Activated B cell treated with CpG ODN at 0.5 μM for 24 hours (primary cell): ENCODE measurements at regions of chr5 and their contacts with region 1.

Region 1: DNA sequence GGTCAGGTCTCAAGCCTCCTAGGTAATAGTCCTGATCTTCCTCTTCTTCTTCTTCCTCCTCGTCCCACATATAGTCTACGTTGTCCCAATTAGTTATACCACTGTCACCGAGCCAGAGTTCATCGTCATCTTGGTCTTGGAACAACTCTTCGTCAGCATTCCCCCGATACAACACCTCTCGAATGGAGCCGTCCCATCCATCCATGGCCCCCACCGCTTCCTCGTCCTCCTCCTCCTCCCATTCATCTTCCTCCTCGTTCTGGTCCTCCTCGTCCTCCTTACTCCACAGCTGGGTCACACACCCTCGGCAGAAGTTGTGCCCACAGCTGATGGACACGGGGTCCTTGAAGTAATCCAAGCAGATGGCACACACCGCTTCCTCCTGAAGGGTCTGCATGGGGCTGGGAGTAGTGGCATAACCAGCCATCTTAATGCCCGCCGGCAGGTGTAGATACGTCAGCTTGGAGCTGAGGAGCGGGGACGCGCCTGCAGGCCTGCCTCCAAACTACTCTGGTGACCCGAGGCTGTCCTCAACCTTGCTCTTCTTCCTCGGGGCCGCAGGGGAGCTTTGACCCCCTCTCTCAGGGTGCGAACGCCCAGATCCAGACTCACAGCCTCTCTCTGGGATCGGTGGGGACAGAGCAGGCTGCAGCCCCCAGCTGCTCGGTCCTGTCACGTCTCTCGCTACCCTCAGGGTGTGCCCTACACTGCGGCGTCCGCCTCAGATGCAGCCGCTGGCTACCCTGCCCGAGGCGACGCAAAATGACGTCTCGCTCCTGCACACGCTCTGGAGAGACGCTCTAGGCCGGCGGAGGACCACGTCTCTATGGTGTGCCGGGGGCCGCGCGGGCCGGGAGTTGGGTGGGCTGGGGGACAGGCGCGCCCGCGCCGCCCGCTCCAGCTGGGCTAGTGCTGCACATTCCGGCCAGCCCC is at the start of gene TRIM52:
- DNase-seq: peak; percentile 86
- ATAC-seq: peak; percentile 80
- H3K4me3 Mint-ChIP-seq: peak within 1 kb of the TSS; percentile 98
- H3K27ac Mint-ChIP-seq: peak within 1 kb of the TSS; percentile 96
- H3K4me1 Mint-ChIP-seq: peaks cover 49% of the 10 kb centered on the region
- H3K27me3 Mint-ChIP-seq: no peaks in the 10 kb centered on the region
- CTCF ChIP-seq: no peak
- total RNA-seq, gene TRIM52: 30.9 and 36.9 TPM in 2 replicates

Region 2: DNA sequence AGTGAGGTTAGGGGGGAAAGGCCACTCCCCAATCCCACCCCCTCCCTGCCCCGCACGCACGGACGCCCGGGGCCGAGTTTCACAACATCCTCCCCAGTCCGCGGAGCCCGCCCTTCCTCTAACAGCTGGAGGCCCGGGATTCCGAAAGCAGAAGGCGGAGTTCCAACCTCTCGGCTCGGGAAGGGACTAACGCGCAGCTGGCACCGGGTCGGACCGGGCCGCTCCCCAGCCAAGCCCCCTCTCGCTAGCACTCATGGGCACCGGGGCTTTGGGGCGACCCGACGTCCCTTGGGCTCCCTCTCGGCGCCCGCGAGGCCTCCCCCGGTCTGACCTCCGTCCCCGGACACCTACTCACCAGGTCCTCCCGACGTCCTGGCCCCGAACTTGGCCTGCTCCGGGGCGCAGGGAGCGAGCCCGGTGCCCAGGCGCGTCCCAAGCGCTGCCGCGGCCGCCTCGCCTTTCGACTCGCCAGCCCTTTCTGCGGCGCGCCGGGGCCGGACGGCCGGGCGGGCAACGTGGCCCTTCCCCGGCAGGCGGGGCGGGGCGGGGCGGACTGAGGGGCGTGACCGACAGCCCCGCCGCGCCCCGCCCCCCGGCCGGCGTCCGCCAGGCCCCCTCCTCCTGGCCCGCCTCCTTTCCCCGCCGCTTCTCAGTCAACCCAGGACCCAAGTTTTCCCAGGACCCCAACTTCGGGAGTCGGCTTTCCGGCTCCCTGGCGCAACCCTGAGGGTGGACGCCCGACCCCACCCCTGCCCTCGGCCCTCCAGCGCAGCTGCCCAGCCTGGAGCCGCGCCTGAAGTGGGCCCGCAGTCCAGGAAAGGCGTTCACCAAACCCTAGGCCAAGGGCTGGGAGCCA is 458.1 kb before region 1 on chr5 and contains the start of gene MGAT1:
- CTCF ChIA-PET with region 1: no interaction called
- POLR2A ChIA-PET with region 1: interaction called, 4 read pairs
- intact Hi-C with region 1: loop called (anchors 2 kb)
- DNase-seq: peak; percentile 84
- ATAC-seq: peak; percentile 60
- H3K4me3 Mint-ChIP-seq: peak within 1 kb of the TSS; percentile 91
- H3K27ac Mint-ChIP-seq: peak within 1 kb of the TSS; percentile 91
- H3K4me1 Mint-ChIP-seq: peaks cover 84% of the 10 kb centered on the region
- H3K27me3 Mint-ChIP-seq: no peaks in the 10 kb centered on the region
- CTCF ChIP-seq: no peak
- total RNA-seq, gene MGAT1: 66.9 and 74.5 TPM in 2 replicates

Region 3: GRCh38 chr5:181159286-181159829 is 101.3 kb before region 1 on chr5:
- CTCF ChIA-PET with region 1: no interaction called
- POLR2A ChIA-PET with region 1: no interaction called
- intact Hi-C with region 1: loop called (anchors 5 kb)
- DNase-seq: peak; percentile 87
- ATAC-seq: peak; percentile 74
- H3K4me3 Mint-ChIP-seq: peak overlapping the region; percentile 75
- H3K27ac Mint-ChIP-seq: peak overlapping the region; percentile 81
- H3K4me1 Mint-ChIP-seq: peaks cover 29% of the 10 kb centered on the region
- H3K27me3 Mint-ChIP-seq: peaks cover 10% of the 10 kb centered on the region
- CTCF ChIP-seq: no peak

Region 4: GRCh38 chr5:181207214-181208107 is 53.2 kb before region 1 on chr5:
- CTCF ChIA-PET with region 1: interaction called, 3 read pairs
- POLR2A ChIA-PET with region 1: interaction called, 32 read pairs
- intact Hi-C with region 1: no loop called
- DNase-seq: peak; percentile 56
- ATAC-seq: peak; percentile 62
- H3K4me3 Mint-ChIP-seq: peak overlapping the region; percentile 92
- H3K27ac Mint-ChIP-seq: peak overlapping the region; percentile 97
- H3K4me1 Mint-ChIP-seq: peaks cover 34% of the 10 kb centered on the region
- H3K27me3 Mint-ChIP-seq: peaks cover 15% of the 10 kb centered on the region
- CTCF ChIP-seq: no peak

Region 5: GRCh38 chr5:181234455-181235306 is 26.0 kb before region 1 on chr5:
- CTCF ChIA-PET with region 1: no interaction called
- POLR2A ChIA-PET with region 1: interaction called, 15 read pairs
- intact Hi-C with region 1: no loop called
- DNase-seq: no peak
- ATAC-seq: no peak
- H3K4me3 Mint-ChIP-seq: no peak overlapping the region
- H3K27ac Mint-ChIP-seq: peak overlapping the region; percentile 59
- H3K4me1 Mint-ChIP-seq: peaks cover 9% of the 10 kb centered on the region
- H3K27me3 Mint-ChIP-seq: no peaks in the 10 kb centered on the region
- CTCF ChIP-seq: no peak